CD4-positive, alpha-beta memory T cell (primary cell): ENCODE measurements at regions of chr10 and their contacts with region 1.

Region 1: GRCh38 chr10:132536971-132537712 is 445 bp upstream of the INPP5A start:
- DNase-seq: peak; percentile 100
- H3K4me3 ChIP-seq: peak overlapping the region in 1 of 2 donors; percentile 55
- H3K4me3 Mint-ChIP-seq: peak overlapping the region in 7 of 8 donors; percentile 58 to 83 (median 79)
- H3K27ac ChIP-seq: peak overlapping the region; percentile 65
- H3K27ac Mint-ChIP-seq: peak overlapping the region in 4 of 7 donors; percentile 64 to 83 (median 72)
- H3K4me1 ChIP-seq: peaks cover 38% of the 10 kb centered on the region
- H3K4me1 Mint-ChIP-seq: peaks cover 28 to 54% (median 36%) of the 10 kb centered on the region in 4 donors
- H3K27me3 ChIP-seq: no peaks in the 10 kb centered on the region
- H3K27me3 Mint-ChIP-seq: peaks cover 0 to 2% of the 10 kb centered on the region in 2 donors

Region 2: GRCh38 chr10:132158122-132158741 is 378.9 kb before region 1 on chr10:
- CTCF ChIA-PET with region 1: no interaction called
- POLR2A ChIA-PET with region 1: no interaction called
- intact Hi-C with region 1: loop called (anchors 2 kb)
- DNase-seq: peak; percentile 66 to 75 (median 73)
- H3K4me3 ChIP-seq: no peak overlapping the region
- H3K4me3 Mint-ChIP-seq: peak overlapping the region in 4 of 8 donors; percentile 7 to 54 (median 12)
- H3K27ac ChIP-seq: peak overlapping the region; percentile 97
- H3K27ac Mint-ChIP-seq: peak overlapping the region; percentile 93 to 96 (median 94)
- H3K4me1 ChIP-seq: peaks cover 32% of the 10 kb centered on the region
- H3K4me1 Mint-ChIP-seq: peaks cover 14 to 40% (median 33%) of the 10 kb centered on the region in 4 donors
- H3K27me3 ChIP-seq: no peaks in the 10 kb centered on the region
- H3K27me3 Mint-ChIP-seq: no peaks in the 10 kb centered on the region

Region 3: GRCh38 chr10:132331526-132332432 is 205.4 kb before region 1 on chr10 and contains the start of gene LRRC27:
- CTCF ChIA-PET with region 1: no interaction called
- POLR2A ChIA-PET with region 1: no interaction called
- intact Hi-C with region 1: loop called (anchors 1 kb)
- DNase-seq: peak; percentile 98 to 100 (median 100)
- H3K4me3 ChIP-seq: peak within 1 kb of the TSS; percentile 79 to 95
- H3K4me3 Mint-ChIP-seq: peak within 1 kb of the TSS; percentile 85 to 94 (median 90)
- H3K27ac ChIP-seq: peak within 1 kb of the TSS; percentile 77
- H3K27ac Mint-ChIP-seq: peak within 1 kb of the TSS; percentile 80 to 97 (median 95)
- H3K4me1 ChIP-seq: peaks cover 39% of the 10 kb centered on the region
- H3K4me1 Mint-ChIP-seq: peaks cover 27 to 75% (median 48%) of the 10 kb centered on the region in 4 donors
- H3K27me3 ChIP-seq: no peaks in the 10 kb centered on the region
- H3K27me3 Mint-ChIP-seq: peaks cover 0 to 1% of the 10 kb centered on the region in 2 donors
- total RNA-seq, gene LRRC27: 3.7 to 3.8 TPM

Region 4: GRCh38 chr10:132371641-132372081 is 165.5 kb before region 1 on chr10:
- CTCF ChIA-PET with region 1: no interaction called
- POLR2A ChIA-PET with region 1: no interaction called
- intact Hi-C with region 1: no loop called
- DNase-seq: no peak
- H3K4me3 ChIP-seq: no peak overlapping the region
- H3K4me3 Mint-ChIP-seq: no peak overlapping the region
- H3K27ac ChIP-seq: no peak overlapping the region
- H3K27ac Mint-ChIP-seq: no peak overlapping the region
- H3K4me1 ChIP-seq: no peaks in the 10 kb centered on the region
- H3K4me1 Mint-ChIP-seq: peaks cover 2 to 5% (median 5%) of the 10 kb centered on the region in 4 donors
- H3K27me3 ChIP-seq: no peaks in the 10 kb centered on the region
- H3K27me3 Mint-ChIP-seq: no peaks in the 10 kb centered on the region

Region 5: GRCh38 chr10:132446661-132447194 is 90.4 kb before region 1 on chr10:
- CTCF ChIA-PET with region 1: no interaction called
- POLR2A ChIA-PET with region 1: no interaction called
- intact Hi-C with region 1: loop called (anchors 1 kb)
- DNase-seq: peak; percentile 67 to 75 (median 69)
- H3K4me3 ChIP-seq: peak overlapping the region in 1 of 2 donors; percentile 51
- H3K4me3 Mint-ChIP-seq: peak overlapping the region; percentile 58 to 87 (median 72)
- H3K27ac ChIP-seq: peak overlapping the region; percentile 84
- H3K27ac Mint-ChIP-seq: peak overlapping the region; percentile 87 to 100 (median 98)
- H3K4me1 ChIP-seq: peaks cover 57% of the 10 kb centered on the region
- H3K4me1 Mint-ChIP-seq: peaks cover 18 to 60% (median 33%) of the 10 kb centered on the region in 4 donors
- H3K27me3 ChIP-seq: no peaks in the 10 kb centered on the region
- H3K27me3 Mint-ChIP-seq: no peaks in the 10 kb centered on the region

Region 6: DNA sequence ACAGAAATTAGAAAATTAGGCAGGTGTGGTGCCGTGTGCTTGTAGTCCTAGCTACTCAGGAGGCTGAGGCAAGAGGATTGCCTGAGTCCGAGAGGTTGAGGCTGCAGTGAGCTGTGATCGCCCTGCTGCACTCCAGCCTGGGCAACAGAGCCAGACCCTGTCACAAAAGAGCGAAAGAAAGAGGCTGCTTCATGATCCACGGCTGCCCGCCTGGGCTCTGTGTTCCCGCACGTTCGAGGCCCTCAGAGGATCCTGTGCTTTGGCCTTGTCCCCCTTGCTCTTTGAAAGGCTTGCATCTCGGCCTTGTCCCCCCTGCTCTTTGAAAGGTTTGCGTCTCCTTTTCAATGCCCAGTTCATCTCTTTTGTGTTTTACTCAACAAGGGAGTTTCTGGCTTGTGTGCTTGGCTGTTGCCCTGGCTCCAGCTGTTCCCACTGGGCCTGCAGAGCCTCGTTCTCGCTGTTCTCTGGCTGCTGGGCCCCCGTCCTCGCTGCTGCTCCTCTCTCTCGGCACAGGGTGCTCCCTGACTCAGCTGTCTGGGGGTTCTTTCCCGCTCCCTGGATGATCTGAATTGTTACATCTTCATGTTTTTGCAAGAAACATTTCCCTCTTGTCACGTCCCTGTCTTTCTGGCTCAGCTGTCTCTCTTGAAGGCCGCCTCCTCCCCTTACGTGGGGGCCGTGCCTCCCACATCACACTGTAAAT is 44.7 kb before region 1 on chr10:
- CTCF ChIA-PET with region 1: no interaction called
- POLR2A ChIA-PET with region 1: no interaction called
- intact Hi-C with region 1: no loop called
- DNase-seq: no peak
- H3K4me3 ChIP-seq: no peak overlapping the region
- H3K4me3 Mint-ChIP-seq: no peak overlapping the region
- H3K27ac ChIP-seq: no peak overlapping the region
- H3K27ac Mint-ChIP-seq: peak overlapping the region in 1 of 7 donors; percentile 29
- H3K4me1 ChIP-seq: no peaks in the 10 kb centered on the region
- H3K4me1 Mint-ChIP-seq: no peaks in the 10 kb centered on the region
- H3K27me3 ChIP-seq: no peaks in the 10 kb centered on the region
- H3K27me3 Mint-ChIP-seq: peaks cover 1 to 4% of the 10 kb centered on the region in 2 donors

Region 7: DNA sequence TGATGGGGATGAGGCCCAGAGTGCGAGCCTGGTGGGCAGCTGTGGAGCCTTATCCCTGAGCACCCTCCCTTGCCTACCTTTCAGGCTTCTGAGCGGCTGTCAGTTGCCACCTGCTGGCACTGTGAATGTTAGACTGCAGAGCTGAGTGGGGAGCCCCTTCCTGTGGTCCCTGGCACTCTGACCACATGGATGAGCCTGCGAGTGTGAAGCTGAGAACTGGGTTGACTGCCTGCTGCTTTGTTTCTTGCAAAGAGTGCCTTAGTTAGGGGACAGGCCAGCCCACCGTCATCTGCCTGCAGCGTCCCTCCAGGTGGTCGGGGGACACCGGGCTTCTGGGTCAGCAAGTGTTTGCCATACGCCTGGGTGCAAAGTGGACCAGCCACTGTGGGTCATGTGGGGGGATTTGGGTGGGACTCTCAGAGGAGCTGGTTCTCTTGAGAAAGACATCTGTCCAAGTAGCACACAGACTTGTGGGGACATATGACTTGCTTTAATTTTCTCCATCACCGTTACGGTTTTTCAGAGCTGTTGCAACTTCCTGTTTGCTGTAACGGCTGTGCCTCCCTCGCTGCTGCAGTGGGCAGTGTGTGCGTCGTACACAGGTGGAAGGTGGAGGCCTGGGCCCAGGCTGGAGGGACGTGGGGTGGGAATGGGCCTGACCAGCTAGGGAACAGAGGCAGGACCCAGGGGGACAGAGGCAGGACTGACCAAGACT is 14.1 kb after region 1 on chr10:
- CTCF ChIA-PET with region 1: interaction called, 12 read pairs
- POLR2A ChIA-PET with region 1: interaction called, 10 read pairs
- intact Hi-C with region 1: no loop called
- DNase-seq: peak in 1 of 5 donors; percentile 28
- H3K4me3 ChIP-seq: peak overlapping the region in 1 of 2 donors; percentile 24
- H3K4me3 Mint-ChIP-seq: peak overlapping the region; percentile 33 to 84 (median 74)
- H3K27ac ChIP-seq: no peak overlapping the region
- H3K27ac Mint-ChIP-seq: peak overlapping the region; percentile 35 to 81 (median 68)
- H3K4me1 ChIP-seq: peaks cover 45% of the 10 kb centered on the region
- H3K4me1 Mint-ChIP-seq: peaks cover 13 to 30% (median 21%) of the 10 kb centered on the region in 4 donors
- H3K27me3 ChIP-seq: no peaks in the 10 kb centered on the region
- H3K27me3 Mint-ChIP-seq: no peaks in the 10 kb centered on the region

Region 8: DNA sequence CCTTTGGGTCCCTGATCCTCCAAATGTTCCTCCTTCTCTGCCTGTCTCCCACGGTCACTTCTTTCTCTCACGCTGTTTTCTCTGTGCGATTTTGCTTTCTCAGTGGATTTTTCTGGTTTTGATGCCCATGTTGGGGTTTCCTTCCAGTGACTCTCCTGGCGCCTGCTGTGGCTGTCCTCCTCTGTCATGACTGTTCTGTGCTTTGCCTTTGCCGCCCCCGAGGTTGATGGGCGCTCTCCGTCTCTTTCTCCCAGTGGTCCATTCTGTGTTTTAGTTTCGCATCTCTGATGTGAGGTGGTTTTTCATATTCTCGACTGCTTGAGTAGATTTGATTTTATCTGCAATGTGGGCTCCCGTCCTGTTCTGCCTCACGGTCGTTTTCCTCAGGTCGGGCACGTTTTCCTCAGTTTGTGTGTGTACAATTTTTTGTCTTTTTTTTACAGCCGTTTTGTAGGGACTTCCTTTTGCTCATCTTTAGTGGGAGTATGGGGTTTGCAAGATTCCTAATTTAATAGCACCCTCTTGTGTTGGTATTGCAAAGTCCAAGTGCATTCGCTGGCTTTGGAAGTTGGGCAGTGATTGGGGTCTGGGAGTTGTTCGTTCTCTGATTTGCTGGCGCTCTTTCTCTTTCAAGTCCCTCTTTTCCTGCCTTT is 100.5 kb after region 1 on chr10:
- CTCF ChIA-PET with region 1: interaction called, 3 read pairs
- POLR2A ChIA-PET with region 1: no interaction called
- intact Hi-C with region 1: loop called (anchors 1 kb)
- DNase-seq: peak in 4 of 5 donors; percentile 43 to 55 (median 49)
- H3K4me3 ChIP-seq: no peak overlapping the region
- H3K4me3 Mint-ChIP-seq: peak overlapping the region in 3 of 8 donors; percentile 40 to 53 (median 52)
- H3K27ac ChIP-seq: no peak overlapping the region
- H3K27ac Mint-ChIP-seq: peak overlapping the region in 5 of 7 donors; percentile 7 to 50 (median 39)
- H3K4me1 ChIP-seq: peaks cover 8% of the 10 kb centered on the region
- H3K4me1 Mint-ChIP-seq: peaks cover 17 to 28% (median 20%) of the 10 kb centered on the region in 4 donors
- H3K27me3 ChIP-seq: no peaks in the 10 kb centered on the region
- H3K27me3 Mint-ChIP-seq: no peaks in the 10 kb centered on the region